Thyroid gland (tissue), 4 donors: ENCODE measurements at regions of chr10 and their contacts with region 1.

Region 1: GRCh38 chr10:13099666-13100348 is at the start of gene OPTN:
- DNase-seq: peak; percentile 73 to 75
- H3K4me3 ChIP-seq: peak within 1 kb of the TSS; percentile 42 to 100 (median 99)
- H3K27ac ChIP-seq: peak within 1 kb of the TSS; percentile 82 to 94 (median 92)
- H3K4me1 ChIP-seq: peaks cover 0 to 3% of the 10 kb centered on the region in 2 donors
- H3K27me3 ChIP-seq: no peaks in the 10 kb centered on the region
- CTCF ChIP-seq: peak; percentile 22 to 72 (median 54)
- POLR2A ChIP-seq: peak in 1 of 2 donors; percentile 70
- total RNA-seq, gene OPTN: 19.9 to 39.5 (median 26.8) TPM

Region 2: DNA sequence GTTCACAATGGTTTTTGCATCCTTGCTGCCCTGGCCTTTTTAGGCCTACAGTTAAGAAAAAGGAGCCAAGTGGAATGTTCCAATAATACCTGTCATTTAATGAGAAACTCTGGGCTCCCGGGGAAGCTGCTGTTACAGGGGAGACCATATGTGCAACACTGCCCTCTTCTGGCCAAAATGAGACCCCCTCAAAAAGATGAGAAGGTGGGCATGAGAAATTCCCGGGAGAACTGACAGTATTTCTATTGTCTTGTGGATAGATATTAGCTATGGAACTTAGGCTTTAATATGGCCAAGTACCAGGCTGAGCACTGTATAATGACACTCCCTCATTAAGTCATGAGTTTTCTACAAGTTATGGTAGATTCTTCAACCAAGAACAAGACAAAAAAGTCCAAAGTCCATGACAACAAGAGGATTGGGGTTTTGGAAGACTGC is 197.7 kb before region 1 on chr10:
- intact Hi-C with region 1: loop called (anchors 10 kb)
- DNase-seq: peak; percentile 66 to 69
- H3K4me3 ChIP-seq: no peak overlapping the region
- H3K27ac ChIP-seq: no peak overlapping the region
- H3K4me1 ChIP-seq: no peaks in the 10 kb centered on the region
- H3K27me3 ChIP-seq: no peaks in the 10 kb centered on the region
- CTCF ChIP-seq: peak; percentile 59 to 81 (median 67)
- POLR2A ChIP-seq: no peak

Region 3: DNA sequence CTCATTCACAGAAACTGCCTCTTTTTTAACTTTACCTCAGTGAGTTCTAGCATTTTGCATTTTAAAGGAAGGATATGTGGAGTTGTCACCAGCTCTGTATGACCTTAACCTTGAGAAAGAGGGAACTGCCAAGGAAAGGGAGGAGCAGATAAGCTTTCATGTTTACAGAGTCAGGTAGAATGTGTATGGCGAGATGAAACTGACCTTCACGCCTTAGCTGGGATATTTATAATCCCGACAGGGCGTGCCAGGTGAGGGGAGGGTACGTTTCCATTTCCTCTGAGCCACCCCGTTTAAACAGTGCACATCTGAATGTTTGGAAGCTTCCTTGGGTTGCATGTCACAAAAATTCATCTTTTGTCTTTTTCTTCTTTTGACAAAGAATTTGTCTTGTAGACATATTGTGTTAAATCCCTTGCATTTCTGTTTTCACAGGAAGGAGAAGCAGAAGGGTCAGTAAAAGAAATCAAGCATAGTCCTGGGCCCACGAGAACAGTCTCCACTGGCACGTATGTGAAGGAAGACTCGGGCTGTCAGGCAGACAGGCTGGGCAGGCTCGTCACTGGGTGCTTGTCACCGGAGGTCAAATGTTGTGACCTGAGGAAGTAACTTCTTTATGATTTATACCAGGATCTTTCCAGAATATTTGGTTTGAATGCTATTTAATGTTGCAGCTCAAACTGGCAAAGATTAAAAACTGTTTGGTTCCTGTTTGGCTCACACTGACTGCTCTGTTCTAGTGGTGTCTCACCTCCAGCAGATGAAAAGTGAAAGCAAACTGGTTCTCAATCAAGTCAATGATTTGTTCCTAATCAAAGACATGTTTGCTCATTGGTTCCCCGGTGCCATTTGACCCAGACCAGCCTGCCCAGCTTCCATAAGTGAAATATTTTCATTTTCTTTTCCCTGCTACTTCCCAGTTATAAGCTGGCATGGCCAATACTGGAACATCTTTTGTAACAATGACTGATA is 16.3 kb after region 1 on chr10:
- intact Hi-C with region 1: no loop called
- DNase-seq: no peak
- H3K4me3 ChIP-seq: no peak overlapping the region
- H3K27ac ChIP-seq: peak overlapping the region in 1 of 3 donors; percentile 36
- H3K4me1 ChIP-seq: no peaks in the 10 kb centered on the region
- H3K27me3 ChIP-seq: no peaks in the 10 kb centered on the region
- CTCF ChIP-seq: no peak
- POLR2A ChIP-seq: no peak

Region 4: GRCh38 chr10:13146383-13146782 is 46.6 kb after region 1 on chr10:
- intact Hi-C with region 1: no loop called
- DNase-seq: no peak
- H3K4me3 ChIP-seq: no peak overlapping the region
- H3K27ac ChIP-seq: no peak overlapping the region
- H3K4me1 ChIP-seq: peaks cover 0 to 6% of the 10 kb centered on the region in 2 donors
- H3K27me3 ChIP-seq: no peaks in the 10 kb centered on the region
- CTCF ChIP-seq: no peak
- POLR2A ChIP-seq: no peak

Region 5: GRCh38 chr10:13247246-13247645 is 147.4 kb after region 1 on chr10:
- intact Hi-C with region 1: no loop called
- DNase-seq: no peak
- H3K4me3 ChIP-seq: no peak overlapping the region
- H3K27ac ChIP-seq: no peak overlapping the region
- H3K4me1 ChIP-seq: no peaks in the 10 kb centered on the region
- H3K27me3 ChIP-seq: no peaks in the 10 kb centered on the region
- CTCF ChIP-seq: no peak
- POLR2A ChIP-seq: no peak